ENCODE measurements at regions of chr16 and their contacts with region 1.

Region 1: DNA sequence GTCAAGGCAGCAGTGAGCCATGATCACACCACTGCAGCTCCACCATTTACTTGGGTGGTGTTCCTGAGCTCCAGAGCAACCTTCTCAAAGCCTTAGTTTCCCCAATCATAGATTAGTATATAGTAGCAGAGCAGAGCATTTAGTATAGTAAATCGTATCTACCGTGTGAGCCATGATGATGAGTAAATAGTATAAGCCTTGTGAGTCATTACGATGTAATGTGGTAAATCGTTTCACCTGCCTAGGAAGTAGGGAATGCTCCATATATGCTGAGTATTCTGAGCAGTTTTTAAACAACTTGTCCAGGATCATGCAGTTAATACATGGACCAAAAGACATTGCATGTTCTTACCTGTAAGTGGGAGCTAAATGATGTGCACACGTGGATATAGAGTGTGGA is 66.4 kb downstream of the SCNN1B start:
- DNase-seq: no peak
- H3K4me3 ChIP-seq: no peak overlapping the region
- H3K27ac ChIP-seq: no peak overlapping the region
- H3K4me1 ChIP-seq: peaks cover 0 to 2% (median 0%) of the 10 kb centered on the region in 4 experiments; a peak in 1 of 7 replicates
- H3K27me3 ChIP-seq: no peaks in the 10 kb centered on the region
- CTCF ChIP-seq: no peak
- EP300 ChIP-seq: no peak
- POLR2A ChIP-seq: no peak
- RAD21 ChIP-seq: no peak

Region 2: GRCh38 chr16:23384878-23385277 is 16.4 kb after region 1 on chr16:
- CTCF ChIA-PET with region 1: interaction called, 13 read pairs
- POLR2A ChIA-PET with region 1: no interaction called
- DNase-seq: no peak
- H3K4me3 ChIP-seq: no peak overlapping the region
- H3K27ac ChIP-seq: no peak overlapping the region
- H3K4me1 ChIP-seq: peaks cover 0 to 3% (median under 1%) of the 10 kb centered on the region in 4 experiments; a peak in 1 of 7 replicates
- H3K27me3 ChIP-seq: no peaks in the 10 kb centered on the region
- CTCF ChIP-seq: no peak
- EP300 ChIP-seq: no peak
- POLR2A ChIP-seq: no peak
- RAD21 ChIP-seq: no peak